OCI-LY7 (cell line): ENCODE measurements at regions of chr13 and their contacts with region 1.

Region 1: DNA sequence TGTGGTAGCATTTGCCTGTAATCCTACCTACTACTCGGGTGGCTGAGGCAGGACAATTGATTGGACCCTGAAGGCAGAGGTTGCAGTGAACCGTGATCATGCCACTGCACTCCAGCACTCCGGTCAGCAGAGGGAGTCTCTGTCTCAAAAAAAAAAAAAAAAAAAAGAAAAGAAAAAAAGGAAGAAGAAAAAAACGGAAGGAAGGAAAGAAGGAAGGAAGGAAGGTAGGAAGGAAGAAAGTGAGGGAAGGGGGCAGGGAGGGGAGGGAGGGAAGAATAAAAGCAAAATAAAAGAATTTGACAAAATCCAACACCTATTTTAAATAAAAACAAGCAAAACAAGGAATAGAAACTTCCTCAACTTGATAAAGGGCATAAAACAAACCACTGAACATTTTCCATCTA is 411.6 kb upstream of the SLITRK5 start:
- DNase-seq: peak; percentile 46
- H3K4me3 ChIP-seq: no peak overlapping the region
- H3K27ac ChIP-seq: no peak overlapping the region
- H3K4me1 ChIP-seq: no peaks in the 10 kb centered on the region
- CTCF ChIP-seq: peak; percentile 68

Region 2: DNA sequence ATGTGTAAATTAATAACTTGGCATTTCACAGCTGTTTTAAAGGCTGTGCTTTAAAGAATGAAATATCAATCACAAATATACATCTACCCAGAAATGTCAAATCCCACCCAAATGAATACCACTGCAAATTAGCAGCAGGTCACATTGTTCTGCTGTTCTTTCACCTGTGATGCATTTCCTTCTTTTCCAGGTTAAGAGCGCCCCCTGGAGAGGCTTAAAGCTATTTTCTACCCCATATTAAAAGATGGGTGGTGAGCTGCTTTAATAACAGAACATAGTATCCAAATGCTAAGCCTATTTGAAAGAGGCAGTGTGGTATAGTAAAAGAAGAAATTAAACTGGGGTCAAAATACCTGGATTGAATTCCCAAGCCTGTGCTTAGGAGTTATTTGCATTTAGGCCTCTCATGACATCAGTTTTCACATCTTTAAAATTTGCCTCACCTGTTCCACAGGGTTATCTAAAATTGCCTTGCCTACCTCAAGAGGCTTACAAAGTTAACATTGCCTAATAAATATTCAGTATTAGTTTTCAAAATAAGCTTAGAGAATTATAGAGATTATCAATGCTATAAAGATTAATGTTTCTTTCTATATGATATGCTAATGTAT is 14.8 kb after region 1 on chr13:
- CTCF ChIA-PET with region 1: no interaction called
- POLR2A ChIA-PET with region 1: interaction called, 9 read pairs
- intact Hi-C with region 1: loop called (anchors 1 kb)
- DNase-seq: peak; percentile 76
- H3K4me3 ChIP-seq: no peak overlapping the region
- H3K27ac ChIP-seq: no peak overlapping the region
- H3K4me1 ChIP-seq: no peaks in the 10 kb centered on the region
- CTCF ChIP-seq: peak; percentile 98

Region 3: DNA sequence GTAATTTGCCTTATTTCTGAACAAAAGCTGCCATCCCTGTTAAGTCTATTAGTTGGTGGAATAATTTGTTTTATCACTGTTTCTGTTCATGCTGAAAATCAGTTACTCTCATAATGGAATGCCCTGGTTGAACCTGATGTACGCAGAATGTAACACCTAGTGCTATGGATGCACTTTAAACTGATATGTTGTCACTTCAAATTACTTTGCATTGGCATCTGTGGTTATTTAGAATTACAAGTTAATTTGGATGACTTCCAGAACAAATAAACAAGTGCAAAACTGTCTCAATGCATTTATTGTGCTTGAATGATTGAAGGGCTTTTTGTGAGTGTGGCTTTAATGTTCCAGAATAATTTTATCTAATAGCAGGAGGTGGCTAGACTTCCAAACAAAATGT is 43.4 kb after region 1 on chr13:
- CTCF ChIA-PET with region 1: no interaction called
- POLR2A ChIA-PET with region 1: no interaction called
- intact Hi-C with region 1: no loop called
- DNase-seq: no peak
- H3K4me3 ChIP-seq: no peak overlapping the region
- H3K27ac ChIP-seq: no peak overlapping the region
- H3K4me1 ChIP-seq: no peaks in the 10 kb centered on the region
- CTCF ChIP-seq: no peak

Region 4: GRCh38 chr13:87497426-87497825 is 237.9 kb after region 1 on chr13:
- CTCF ChIA-PET with region 1: no interaction called
- POLR2A ChIA-PET with region 1: interaction called, 11 read pairs
- intact Hi-C with region 1: no loop called
- DNase-seq: no peak
- H3K4me3 ChIP-seq: no peak overlapping the region
- H3K27ac ChIP-seq: no peak overlapping the region
- H3K4me1 ChIP-seq: no peaks in the 10 kb centered on the region
- CTCF ChIP-seq: no peak

Region 5: DNA sequence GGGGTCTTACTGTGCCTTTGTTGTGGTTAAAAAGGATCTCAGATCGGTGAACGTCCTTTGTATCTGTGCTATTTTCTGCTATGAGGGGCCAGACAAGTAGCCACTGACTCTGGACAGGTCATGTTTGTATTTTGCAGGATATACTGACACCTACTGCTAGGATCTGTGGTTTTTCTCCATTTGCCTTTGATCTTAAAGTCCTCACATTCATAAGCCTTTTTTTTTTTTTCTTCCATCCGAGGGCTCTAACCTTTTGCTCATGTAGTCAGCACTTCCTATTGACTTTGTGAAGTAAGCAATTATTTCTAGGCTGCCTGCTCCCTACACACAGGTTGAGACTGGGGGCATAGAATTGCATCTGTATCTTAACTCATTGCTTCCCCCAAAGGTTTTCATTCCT is 517.8 kb after region 1 on chr13:
- CTCF ChIA-PET with region 1: no interaction called
- POLR2A ChIA-PET with region 1: no interaction called
- intact Hi-C with region 1: loop called (anchors 10 kb)
- DNase-seq: peak; percentile 50
- H3K4me3 ChIP-seq: peak overlapping the region; percentile 32
- H3K27ac ChIP-seq: no peak overlapping the region
- H3K4me1 ChIP-seq: peaks cover 8% of the 10 kb centered on the region
- CTCF ChIP-seq: peak; percentile 72